ENCODE measurements at regions of chr18 and their contacts with region 1.

Region 1: GRCh38 chr18:58231930-58232329 is 187.9 kb downstream of the NEDD4L start:
- DNase-seq: no peak
- ATAC-seq: peak; percentile 55

Region 2: DNA sequence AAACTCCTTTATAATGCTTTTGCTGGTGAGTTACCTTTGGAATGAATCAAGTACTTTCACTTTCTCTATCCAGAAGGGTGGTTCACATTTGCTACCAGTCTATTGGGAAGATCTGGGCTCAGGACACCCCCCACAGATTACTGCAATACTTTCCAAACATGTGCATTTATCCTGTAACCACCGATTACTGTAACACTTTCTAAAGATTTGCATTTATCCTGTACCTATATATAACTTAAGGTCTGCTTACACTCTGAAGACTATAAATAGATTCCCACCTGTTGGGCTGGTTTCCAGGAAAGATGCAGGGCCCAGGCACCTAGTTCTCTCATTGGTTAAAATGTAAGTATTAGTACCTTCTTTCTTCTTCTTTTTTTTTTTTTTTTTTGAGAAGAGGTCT is 300.9 kb before region 1 on chr18:
- intact Hi-C with region 1: no loop called
- DNase-seq: no peak
- ATAC-seq: no peak

Region 3: GRCh38 chr18:58135701-58136331 is 96.1 kb before region 1 on chr18:
- intact Hi-C with region 1: loop called (anchors 5 kb)
- DNase-seq: no peak
- ATAC-seq: peak; percentile 56

Region 4: DNA sequence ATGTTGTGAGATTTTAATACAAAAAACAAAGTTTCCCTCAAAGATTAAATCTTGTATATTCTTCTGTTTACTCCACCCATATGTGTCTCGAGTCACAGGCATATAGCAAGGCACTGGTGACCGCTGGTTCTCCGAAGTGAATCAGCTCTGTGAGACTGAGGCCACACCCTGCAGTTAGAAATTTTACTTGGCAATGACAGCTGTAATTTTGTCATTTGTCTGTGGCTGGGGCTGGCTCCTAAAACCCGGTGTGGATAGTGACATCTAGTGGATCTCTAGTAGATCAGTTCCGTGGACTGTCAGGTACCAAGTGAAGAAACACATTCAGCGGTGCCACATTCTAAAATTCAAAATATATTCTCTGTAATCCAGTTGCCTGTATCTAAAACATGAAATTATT is 90.1 kb after region 1 on chr18:
- intact Hi-C with region 1: no loop called
- DNase-seq: no peak
- ATAC-seq: peak; percentile 92

Region 5: DNA sequence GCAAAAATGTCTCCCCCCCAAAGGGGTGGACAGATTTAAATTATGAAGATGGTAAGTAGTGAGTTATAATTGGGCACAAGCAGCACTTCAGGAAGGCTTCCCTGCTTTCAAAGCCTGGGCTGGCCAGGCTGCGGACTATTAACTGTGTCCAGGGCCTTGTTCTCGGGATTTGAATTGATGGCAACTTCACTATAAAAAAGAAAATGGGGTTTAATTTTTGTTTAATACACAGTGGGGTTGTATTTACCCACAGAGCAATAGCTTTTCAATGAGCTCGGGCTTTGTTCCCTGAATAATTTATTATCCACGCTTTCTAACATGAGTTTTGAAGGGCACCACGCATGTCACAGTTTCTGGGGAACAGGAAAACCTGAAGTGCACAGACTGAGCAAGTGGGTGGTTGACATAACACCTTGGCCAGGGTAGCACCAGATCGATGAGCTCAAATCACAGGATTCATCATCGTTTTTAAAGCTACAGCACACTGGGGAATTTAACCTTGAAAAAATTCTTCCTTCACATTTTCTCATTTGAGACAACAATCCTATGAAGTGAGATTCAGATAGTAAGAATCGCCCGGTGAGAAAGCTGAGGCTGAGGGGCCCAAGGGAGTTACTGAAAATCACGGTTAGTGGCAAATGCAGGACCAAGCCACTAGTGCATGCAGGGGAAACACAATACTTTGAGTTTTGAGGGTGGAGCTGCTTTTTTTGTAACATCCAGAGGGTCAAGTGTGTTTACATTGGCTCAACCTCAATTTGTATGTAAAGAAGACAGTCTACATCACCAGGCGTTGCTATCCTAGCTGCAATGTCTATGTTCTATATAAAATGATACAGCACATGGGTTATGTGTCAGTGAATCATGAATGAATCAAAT is 1156.0 kb after region 1 on chr18:
- intact Hi-C with region 1: no loop called
- DNase-seq: no peak
- ATAC-seq: no peak